ENCODE measurements at regions of chr5 and their contacts with region 1.

Region 1: GRCh38 chr5:140157032-140157803 is 17.8 kb upstream of the CYSTM1 start:
- DNase-seq: peak; percentile 92
- H3K4me3 ChIP-seq: peak overlapping the region; percentile 35 to 46
- H3K27ac ChIP-seq: no peak overlapping the region; a peak in 1 of 4 replicates
- H3K4me1 ChIP-seq: peaks cover 0 to 5% of the 10 kb centered on the region in 2 experiments; a peak in 1 of 4 replicates
- H3K27me3 ChIP-seq: no peaks in the 10 kb centered on the region
- CTCF ChIP-seq: peak; percentile 92
- EP300 ChIP-seq: no peak
- RAD21 ChIP-seq: peak; percentile 94

Region 2: GRCh38 chr5:140073296-140073695 is 83.9 kb before region 1 on chr5:
- CTCF ChIA-PET with region 1: interaction called, 147 read pairs
- POLR2A ChIA-PET with region 1: no interaction called
- DNase-seq: peak; percentile 32
- H3K4me3 ChIP-seq: no peak overlapping the region; a peak in 1 of 4 replicates
- H3K27ac ChIP-seq: no peak overlapping the region
- H3K4me1 ChIP-seq: no peaks in the 10 kb centered on the region; a peak in 1 of 4 replicates
- H3K27me3 ChIP-seq: peaks cover 7% of the 10 kb centered on the region; the same call in 1 of the 2 replicates
- CTCF ChIP-seq: peak; percentile 82
- EP300 ChIP-seq: no peak
- RAD21 ChIP-seq: peak; percentile 64

Measured in SK-N-SH (cell line).